AG04449 (cell line): ENCODE measurements at regions of chr19 and their contacts with region 1.

Region 1: DNA sequence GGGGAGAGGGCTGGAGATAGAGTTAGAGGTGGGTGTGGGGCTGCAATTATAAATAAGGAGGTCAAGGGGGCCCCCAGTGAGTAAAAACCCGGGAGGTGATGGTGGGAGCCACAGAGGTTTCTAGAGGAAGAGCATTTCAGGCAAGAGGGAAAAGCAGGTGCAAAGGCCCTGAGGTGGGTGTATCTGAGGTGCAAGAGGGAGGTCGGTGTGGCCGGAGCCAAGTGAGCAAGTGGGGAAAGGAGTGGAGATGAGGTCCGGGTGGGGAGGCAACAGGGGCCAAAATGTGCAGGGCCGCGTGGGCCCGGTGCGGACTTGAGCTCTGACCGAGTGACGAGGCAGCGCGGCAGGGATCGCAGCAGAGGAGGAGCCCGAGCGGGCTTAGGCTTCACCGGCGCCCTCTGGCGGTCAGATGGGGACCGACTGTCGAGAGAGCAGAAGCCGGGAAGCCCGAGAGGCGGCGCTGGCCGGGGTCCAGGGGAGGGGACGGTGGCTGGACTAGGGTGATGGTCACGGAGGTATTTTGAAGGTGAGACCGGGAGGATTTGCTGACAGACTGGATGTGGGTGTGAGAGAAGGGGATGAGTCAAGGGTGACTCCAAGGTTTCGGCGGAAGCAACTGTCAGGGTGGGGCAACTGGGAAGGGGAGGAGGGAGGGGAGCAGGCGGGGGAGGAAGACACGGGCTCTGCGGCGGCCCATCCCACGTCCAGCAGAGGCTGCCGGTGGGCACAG is 17.7 kb upstream of the SPACA4 start:
- DNase-seq: no peak
- H3K4me3 ChIP-seq: peak overlapping the region; percentile 61
- CTCF ChIP-seq: peak; percentile 99

Region 2: GRCh38 chr19:48445606-48446481 is 143.0 kb before region 1 on chr19 and contains the start of gene GRWD1:
- CTCF ChIA-PET with region 1: interaction called, 23 read pairs
- POLR2A ChIA-PET with region 1: no interaction called
- DNase-seq: peak; percentile 63
- H3K4me3 ChIP-seq: peak within 1 kb of the TSS; percentile 90
- CTCF ChIP-seq: no peak

Region 3: GRCh38 chr19:48510421-48511280 is 78.2 kb before region 1 on chr19:
- CTCF ChIA-PET with region 1: interaction called, 405 read pairs
- POLR2A ChIA-PET with region 1: no interaction called
- DNase-seq: no peak
- H3K4me3 ChIP-seq: peak overlapping the region; percentile 50
- CTCF ChIP-seq: no peak

Region 4: DNA sequence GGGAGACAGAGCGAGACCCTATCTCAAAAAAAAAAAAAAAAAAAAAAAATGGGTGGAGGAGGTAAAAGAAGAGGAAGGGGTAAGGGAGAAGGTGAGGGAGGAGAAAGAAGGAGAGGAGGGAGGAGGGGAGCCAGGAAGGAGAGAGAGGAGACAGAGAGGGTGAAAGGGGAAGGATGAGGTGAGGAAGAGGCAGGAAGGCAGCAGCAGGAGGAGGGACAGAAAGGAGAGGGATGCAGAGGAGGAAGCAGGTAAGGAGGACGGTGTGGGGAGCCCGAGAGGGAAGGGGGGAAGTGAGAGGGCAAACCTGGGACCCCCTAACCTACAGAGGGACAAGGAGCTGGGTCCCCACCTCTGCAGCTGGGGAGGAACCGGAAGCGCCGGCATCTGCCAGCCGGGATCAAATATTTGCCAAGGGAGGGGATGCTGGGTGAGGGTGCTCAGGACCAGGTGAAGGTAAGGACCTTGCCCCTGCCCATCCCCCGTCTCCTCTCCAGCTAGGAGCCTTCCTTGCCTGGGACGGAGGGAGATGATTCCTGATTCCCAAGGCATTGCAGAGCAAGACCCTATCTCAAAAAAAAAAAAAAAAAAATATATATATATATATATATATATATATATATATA is 13.4 kb after region 1 on chr19:
- CTCF ChIA-PET with region 1: interaction called, 36 read pairs
- POLR2A ChIA-PET with region 1: no interaction called
- DNase-seq: no peak
- H3K4me3 ChIP-seq: no peak overlapping the region
- CTCF ChIP-seq: no peak